ENCODE measurements at regions of chr12 and their contacts with region 1.

Region 1: GRCh38 chr12:100138048-100138802 is 4.4 kb downstream of the BLTP3B start:
- DNase-seq: no peak
- H3K4me3 Mint-ChIP-seq: no peak overlapping the region
- H3K27ac Mint-ChIP-seq: no peak overlapping the region
- H3K4me1 Mint-ChIP-seq: peaks cover 20% of the 10 kb centered on the region
- H3K27me3 Mint-ChIP-seq: no peaks in the 10 kb centered on the region
- CTCF ChIP-seq: peak; percentile 24

Region 2: DNA sequence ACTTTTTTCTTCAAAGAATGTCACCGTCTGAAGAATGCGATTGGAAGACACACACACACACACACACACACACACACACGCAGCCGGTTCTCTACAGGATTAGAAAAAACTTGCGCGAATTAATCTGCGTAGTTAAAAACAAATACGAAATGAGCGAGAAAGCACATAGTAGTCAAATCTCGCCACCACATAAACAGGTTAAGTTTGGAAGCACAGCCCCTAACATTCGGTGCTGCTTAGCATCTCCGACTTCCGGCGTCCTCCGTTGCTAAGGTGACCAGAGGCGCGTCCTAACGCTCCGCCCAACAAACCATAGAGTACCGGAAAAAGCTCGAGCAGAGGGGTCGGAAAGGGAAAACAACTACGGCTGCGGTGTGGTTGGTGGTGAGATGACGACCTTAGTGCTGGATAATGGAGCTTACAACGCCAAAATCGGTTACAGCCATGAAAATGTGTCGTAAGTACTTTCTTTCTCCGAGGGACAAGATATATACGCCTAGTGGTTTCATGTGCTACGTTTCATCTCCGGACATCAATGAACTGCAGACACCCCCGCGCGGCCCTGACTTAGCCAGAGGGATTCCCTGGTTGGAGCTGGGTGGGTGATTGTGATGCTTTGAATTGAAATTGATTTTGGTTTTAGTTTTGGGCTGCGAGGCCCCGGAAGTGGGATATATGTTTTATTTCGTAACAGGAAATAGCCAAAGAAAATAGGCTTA is 62.4 kb after region 1 on chr12 and contains the start of gene ACTR6:
- CTCF ChIA-PET with region 1: interaction called, 4 read pairs
- intact Hi-C with region 1: loop called (anchors 1 kb)
- DNase-seq: peak; percentile 95
- H3K4me3 Mint-ChIP-seq: peak within 1 kb of the TSS; percentile 80
- H3K27ac Mint-ChIP-seq: peak within 1 kb of the TSS; percentile 96
- H3K4me1 Mint-ChIP-seq: no peaks in the 10 kb centered on the region
- H3K27me3 Mint-ChIP-seq: no peaks in the 10 kb centered on the region
- CTCF ChIP-seq: no peak
- total RNA-seq, gene ACTR6: 35.2 and 35.4 TPM in 2 replicates

Measured in Calu3 (cell line).